Gastrocnemius medialis (tissue), 4 donors: ENCODE measurements at regions of chr2 and their contacts with region 1.

Region 1: DNA sequence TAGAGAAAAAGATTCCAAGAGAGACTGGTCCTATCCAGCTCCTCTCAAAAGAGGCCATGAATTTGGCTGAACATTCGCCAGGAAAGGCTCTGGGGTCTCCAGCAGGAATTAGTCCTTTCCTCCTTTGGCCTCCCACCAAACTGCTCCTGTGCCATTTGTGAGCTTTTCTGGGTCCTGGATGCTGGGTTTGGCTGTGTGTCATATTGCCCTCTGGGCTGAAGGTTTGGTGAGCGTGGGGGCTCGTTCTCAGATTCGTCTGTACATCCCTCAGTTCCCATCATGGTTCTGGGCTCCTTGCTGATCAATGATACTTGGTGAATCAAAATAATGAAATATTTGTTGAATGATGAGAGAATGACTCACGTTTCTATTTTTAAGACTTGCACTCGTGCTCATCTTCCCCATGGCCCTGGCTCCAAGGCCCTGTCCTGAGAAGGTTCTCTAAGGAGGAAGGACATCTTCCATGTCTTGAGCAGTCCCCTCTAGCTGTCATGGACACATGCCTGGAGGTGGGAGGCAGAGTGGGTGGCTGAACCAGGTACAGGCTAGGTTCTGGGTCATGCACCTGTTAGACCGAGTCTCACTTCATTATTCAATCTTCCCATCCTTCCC is 47.8 kb upstream of the RHOB start:
- DNase-seq: no peak
- ATAC-seq: no peak
- H3K4me3 ChIP-seq: no peak overlapping the region
- H3K27ac ChIP-seq: no peak overlapping the region
- H3K4me1 ChIP-seq: no peaks in the 10 kb centered on the region
- H3K27me3 ChIP-seq: no peaks in the 10 kb centered on the region
- CTCF ChIP-seq: no peak
- POLR2A ChIP-seq: no peak

Region 2: DNA sequence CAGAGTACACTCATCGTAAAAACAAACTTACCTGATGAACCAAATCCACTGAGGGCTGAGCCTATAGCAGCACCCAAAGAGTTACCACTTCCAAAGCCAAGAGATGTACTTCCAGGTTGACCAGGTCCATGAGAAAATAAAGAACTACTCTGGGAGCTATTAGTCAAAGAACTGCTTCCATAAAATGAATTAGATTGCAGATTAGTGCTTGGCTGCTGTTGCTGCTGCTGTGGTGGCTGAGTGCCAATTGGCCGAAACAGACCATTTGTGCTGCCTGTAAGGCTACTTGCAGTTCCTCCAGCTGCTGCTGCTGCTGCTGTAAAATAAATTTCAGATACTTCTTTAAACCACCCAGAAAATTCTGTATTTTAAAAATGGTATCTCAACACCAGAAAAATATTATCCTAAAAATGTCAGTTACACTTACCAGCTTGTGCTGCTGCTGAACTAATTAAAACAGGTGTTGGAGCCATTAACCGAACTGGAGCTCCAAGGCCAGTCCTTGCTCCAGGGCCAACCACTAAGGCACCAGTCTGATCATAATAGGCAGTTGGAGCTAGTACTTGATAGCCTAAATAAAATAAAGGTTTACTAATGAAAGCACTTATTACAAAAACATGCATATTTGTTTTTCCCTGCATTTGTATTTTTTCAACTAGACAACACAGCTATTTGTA is 116.0 kb before region 1 on chr2:
- in situ Hi-C with region 1: no loop called
- intact Hi-C with region 1: no loop called
- DNase-seq: no peak
- ATAC-seq: no peak
- H3K4me3 ChIP-seq: no peak overlapping the region
- H3K27ac ChIP-seq: no peak overlapping the region
- H3K4me1 ChIP-seq: peaks cover 0 to 5% of the 10 kb centered on the region in 2 donors
- H3K27me3 ChIP-seq: no peaks in the 10 kb centered on the region
- CTCF ChIP-seq: no peak
- POLR2A ChIP-seq: no peak

Region 3: GRCh38 chr2:20430461-20431300 is 31.6 kb after region 1 on chr2:
- in situ Hi-C with region 1: no loop called
- intact Hi-C with region 1: loop called (anchors 5 kb)
- DNase-seq: no peak
- ATAC-seq: peak in 1 of 2 donors; percentile 50
- H3K4me3 ChIP-seq: no peak overlapping the region
- H3K27ac ChIP-seq: peak overlapping the region; percentile 55 to 71 (median 63)
- H3K4me1 ChIP-seq: peaks cover 11 to 12% of the 10 kb centered on the region in 2 donors
- H3K27me3 ChIP-seq: no peaks in the 10 kb centered on the region
- CTCF ChIP-seq: no peak
- POLR2A ChIP-seq: no peak

Region 4: DNA sequence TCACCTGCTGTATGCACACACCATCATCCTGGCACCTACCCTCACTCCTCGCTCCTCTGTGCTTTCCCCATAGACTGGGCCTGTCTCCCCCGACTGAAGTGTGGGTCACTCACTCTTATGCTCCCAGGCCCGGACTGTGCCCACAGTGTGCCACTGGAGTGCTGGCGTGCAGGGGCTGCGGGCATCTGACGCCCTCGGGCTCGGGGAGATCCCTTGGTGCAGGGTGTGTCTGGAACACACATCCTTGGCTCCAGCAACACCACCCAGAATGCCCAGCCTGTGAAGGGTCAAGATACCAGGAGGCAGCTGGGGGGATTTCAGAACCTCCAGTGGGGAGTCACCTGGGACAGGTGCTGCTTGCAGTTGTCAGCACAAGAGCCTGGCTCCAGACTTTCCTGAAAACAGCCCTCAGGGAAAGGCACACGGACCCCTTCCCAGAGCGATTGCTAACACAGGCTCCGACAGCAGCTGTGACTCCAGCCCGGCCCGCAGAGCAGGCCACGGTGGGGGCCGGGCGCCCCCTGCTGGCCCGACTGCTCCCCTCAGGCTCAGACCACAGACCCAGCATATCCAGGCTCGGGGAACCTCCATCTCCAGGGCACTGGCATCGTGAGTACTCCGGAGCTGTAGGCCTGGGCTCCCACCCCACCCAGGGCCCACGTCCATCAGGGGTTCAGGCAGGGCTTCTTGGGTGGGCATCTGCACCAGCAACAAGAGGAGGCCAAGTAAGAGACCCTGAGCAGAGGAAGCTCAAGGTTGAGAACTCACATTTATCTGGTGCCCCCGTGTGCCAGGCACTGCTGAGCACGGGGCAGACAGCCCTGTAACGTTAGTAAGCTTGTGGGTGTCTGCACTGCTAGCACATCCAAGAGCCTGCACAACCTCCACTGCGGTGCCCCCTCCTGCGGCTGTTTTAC is 243.3 kb after region 1 on chr2:
- in situ Hi-C with region 1: no loop called
- intact Hi-C with region 1: loop called (anchors 5 kb)
- DNase-seq: peak; percentile 56 to 75
- ATAC-seq: peak; percentile 84 to 89
- H3K4me3 ChIP-seq: no peak overlapping the region
- H3K27ac ChIP-seq: peak overlapping the region in 3 of 4 donors; percentile 29 to 52 (median 42)
- H3K4me1 ChIP-seq: peaks cover 0 to 14% of the 10 kb centered on the region in 2 donors
- H3K27me3 ChIP-seq: no peaks in the 10 kb centered on the region
- CTCF ChIP-seq: peak; percentile 88 to 99 (median 97)
- POLR2A ChIP-seq: no peak